Activated CD4-positive, alpha-beta T cell treated with anti-CD3 and anti-CD28 coated beads, Interleukin-2, amount 10 ng/mL, durations not matched to agents 24 days and 14 days (primary cell): ENCODE measurements at regions of chr17 and their contacts with region 1.

Region 1: DNA sequence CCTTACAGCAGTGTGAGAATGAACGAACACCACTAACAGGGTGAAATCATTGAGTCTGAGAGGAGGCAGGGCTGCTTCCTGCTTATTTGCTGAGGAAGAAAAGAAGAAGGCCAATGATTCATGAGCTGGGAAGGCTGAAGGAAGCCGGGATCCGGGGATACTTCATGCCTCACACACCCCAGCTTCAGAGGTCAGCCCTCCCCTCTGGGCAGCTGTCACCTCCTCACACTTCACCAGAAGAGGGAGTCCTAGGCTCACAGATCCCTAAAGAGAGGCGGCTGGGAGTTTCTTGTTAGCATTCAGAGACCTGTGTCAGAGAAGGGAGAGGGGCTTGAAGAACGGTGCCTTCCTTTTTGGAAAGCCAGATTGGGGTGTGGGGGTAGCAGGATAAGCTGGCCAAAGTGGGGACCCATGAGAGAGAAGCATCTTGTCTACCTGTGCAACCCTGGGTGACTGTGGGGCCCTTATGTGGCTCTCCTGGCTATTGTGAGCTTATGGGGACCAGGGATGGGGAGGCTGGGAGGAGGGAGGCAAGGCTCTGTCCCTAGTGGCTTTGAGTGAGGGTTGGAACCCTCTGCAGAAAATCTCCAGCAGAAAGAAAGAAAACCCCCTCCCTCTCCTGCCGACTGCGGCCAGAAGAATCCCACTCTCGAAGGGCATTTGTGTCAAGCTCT is 94.6 kb downstream of the RGS9 start:
- DNase-seq: peak; percentile 88
- H3K4me3 Mint-ChIP-seq: no peak overlapping the region
- H3K27ac Mint-ChIP-seq: peak overlapping the region; percentile 75
- H3K4me1 Mint-ChIP-seq: peaks cover 31% of the 10 kb centered on the region
- H3K27me3 Mint-ChIP-seq: peaks cover 23% of the 10 kb centered on the region

Region 2: GRCh38 chr17:65163990-65164495 is 67.8 kb before region 1 on chr17:
- intact Hi-C with region 1: no loop called
- DNase-seq: peak; percentile 86
- H3K4me3 Mint-ChIP-seq: peak overlapping the region; percentile 47
- H3K27ac Mint-ChIP-seq: peak overlapping the region; percentile 77
- H3K4me1 Mint-ChIP-seq: peaks cover 20% of the 10 kb centered on the region
- H3K27me3 Mint-ChIP-seq: no peaks in the 10 kb centered on the region

Region 3: DNA sequence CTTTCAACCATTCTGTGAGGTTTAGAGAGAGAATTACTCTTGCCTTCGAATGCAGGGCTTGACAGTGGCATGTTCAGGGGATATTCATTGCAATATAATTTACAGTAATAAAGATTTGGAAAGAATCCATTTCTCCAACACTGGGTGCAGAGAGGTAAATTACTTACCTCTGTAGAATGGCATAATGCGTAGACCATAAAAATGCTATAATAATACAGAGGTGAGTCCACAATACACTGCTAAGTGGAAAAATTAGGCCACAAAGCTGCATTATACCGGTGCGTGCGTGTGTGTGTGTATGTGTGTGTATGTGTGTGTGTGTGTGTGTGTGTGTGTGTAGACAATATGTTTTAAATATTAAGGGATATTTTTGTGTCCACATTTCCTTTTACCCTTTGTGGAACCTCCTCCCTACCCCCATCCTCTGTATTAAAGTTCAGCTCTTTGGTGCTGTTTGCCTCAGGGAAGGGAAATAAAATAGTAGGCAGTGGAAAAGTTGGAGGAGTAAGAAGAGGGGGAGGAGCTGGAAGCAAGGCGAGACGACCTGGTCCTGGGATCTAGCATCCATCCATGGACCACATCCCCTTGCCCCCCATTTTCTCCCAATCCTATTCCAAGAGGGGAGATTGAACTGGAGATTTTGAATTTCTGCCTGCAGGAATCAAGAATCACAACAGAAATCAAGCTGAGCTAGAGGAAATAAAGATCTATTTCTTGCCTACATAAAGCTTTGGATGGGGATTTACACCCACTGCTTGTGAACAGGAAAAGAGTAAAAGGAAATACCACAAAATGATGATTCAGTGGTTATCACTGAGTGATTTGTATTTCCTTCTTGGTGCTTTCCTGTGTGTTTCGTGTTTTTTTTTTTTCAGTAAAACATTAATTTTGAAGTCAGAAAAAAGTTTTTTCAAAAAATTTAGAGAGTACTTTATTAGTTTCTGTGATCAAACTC is 30.2 kb after region 1 on chr17:
- intact Hi-C with region 1: loop called (anchors 1 kb)
- DNase-seq: no peak
- H3K4me3 Mint-ChIP-seq: peak overlapping the region; percentile 53
- H3K27ac Mint-ChIP-seq: peak overlapping the region; percentile 58
- H3K4me1 Mint-ChIP-seq: peaks cover 37% of the 10 kb centered on the region
- H3K27me3 Mint-ChIP-seq: peaks cover 23% of the 10 kb centered on the region

Region 4: GRCh38 chr17:65301184-65301583 is 69.4 kb after region 1 on chr17:
- intact Hi-C with region 1: no loop called
- DNase-seq: no peak
- H3K4me3 Mint-ChIP-seq: no peak overlapping the region
- H3K27ac Mint-ChIP-seq: no peak overlapping the region
- H3K4me1 Mint-ChIP-seq: no peaks in the 10 kb centered on the region
- H3K27me3 Mint-ChIP-seq: peaks cover 14% of the 10 kb centered on the region

Region 5: GRCh38 chr17:65385726-65386125 is 153.9 kb after region 1 on chr17:
- intact Hi-C with region 1: no loop called
- DNase-seq: no peak
- H3K4me3 Mint-ChIP-seq: no peak overlapping the region
- H3K27ac Mint-ChIP-seq: no peak overlapping the region
- H3K4me1 Mint-ChIP-seq: no peaks in the 10 kb centered on the region
- H3K27me3 Mint-ChIP-seq: no peaks in the 10 kb centered on the region

Region 6: DNA sequence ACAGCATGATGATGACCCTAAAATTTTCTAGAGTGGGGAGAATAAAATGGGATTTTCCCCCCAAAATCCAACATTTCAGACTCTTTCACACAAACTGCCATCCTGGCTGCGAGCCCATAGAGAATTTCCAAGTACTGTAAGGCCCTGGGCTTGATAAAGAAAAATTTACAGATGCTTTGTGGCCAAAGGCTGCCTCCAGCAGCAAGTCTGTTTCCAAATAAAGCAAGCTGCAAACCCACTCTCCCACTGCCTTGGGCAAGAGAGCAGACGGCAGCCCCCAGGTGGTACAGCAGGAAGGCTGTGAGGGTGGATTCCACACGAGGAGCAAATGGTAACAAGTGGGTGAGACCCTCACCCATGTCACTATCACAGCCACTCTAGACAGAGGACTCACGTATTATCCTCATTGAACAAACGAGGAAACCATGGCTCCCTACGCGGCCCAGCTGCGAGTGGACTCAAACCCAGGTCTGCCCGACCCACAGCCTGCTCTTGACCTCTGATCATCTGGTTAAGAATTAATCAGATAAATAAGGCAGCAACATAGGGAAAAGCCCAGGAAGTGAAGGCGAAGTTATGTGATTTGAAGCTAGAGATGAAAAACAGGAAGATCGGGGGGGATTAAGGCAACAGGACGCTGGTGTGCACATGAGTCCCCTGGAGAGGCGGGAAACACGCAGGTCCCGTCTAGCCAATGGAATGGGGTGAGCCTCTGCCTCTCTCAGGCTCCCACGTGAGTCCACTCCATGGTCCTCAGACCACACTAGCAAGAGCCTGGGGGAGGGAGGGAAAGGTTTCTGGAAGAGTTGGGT is 292.3 kb after region 1 on chr17:
- intact Hi-C with region 1: loop called (anchors 1 kb)
- DNase-seq: peak; percentile 74
- H3K4me3 Mint-ChIP-seq: peak overlapping the region; percentile 73
- H3K27ac Mint-ChIP-seq: peak overlapping the region; percentile 87
- H3K4me1 Mint-ChIP-seq: peaks cover 31% of the 10 kb centered on the region
- H3K27me3 Mint-ChIP-seq: peaks cover 44% of the 10 kb centered on the region

Region 7: DNA sequence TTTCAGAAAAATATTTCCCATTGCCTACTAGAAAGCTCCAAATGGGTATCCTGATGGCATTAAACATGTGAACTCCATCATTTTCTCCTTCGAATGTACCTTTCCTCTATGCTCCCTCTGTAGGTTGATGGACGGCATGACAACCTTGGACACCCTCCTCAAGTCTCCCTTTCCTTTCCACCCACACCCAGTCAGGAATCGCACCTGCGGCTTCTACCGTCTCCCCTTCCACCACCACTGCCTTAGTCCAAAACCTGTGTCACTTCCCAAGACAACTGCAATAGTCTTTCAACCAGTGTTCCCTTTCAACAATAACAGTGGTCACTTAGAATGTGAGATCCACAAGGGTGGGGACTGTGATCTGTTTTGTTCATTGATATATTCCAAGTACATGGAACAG is 562.8 kb after region 1 on chr17:
- intact Hi-C with region 1: loop called (anchors 5 kb)
- DNase-seq: peak; percentile 59
- H3K4me3 Mint-ChIP-seq: no peak overlapping the region
- H3K27ac Mint-ChIP-seq: no peak overlapping the region
- H3K4me1 Mint-ChIP-seq: peaks cover 5% of the 10 kb centered on the region
- H3K27me3 Mint-ChIP-seq: peaks cover 10% of the 10 kb centered on the region

Region 8: GRCh38 chr17:66165513-66166123 is 933.8 kb after region 1 on chr17:
- intact Hi-C with region 1: loop called (anchors 1 kb)
- DNase-seq: peak; percentile 77
- H3K4me3 Mint-ChIP-seq: no peak overlapping the region
- H3K27ac Mint-ChIP-seq: no peak overlapping the region
- H3K4me1 Mint-ChIP-seq: no peaks in the 10 kb centered on the region
- H3K27me3 Mint-ChIP-seq: peaks cover 2% of the 10 kb centered on the region